B cell (primary cell): ENCODE measurements at regions of chr12 and their contacts with region 1.

Region 1: DNA sequence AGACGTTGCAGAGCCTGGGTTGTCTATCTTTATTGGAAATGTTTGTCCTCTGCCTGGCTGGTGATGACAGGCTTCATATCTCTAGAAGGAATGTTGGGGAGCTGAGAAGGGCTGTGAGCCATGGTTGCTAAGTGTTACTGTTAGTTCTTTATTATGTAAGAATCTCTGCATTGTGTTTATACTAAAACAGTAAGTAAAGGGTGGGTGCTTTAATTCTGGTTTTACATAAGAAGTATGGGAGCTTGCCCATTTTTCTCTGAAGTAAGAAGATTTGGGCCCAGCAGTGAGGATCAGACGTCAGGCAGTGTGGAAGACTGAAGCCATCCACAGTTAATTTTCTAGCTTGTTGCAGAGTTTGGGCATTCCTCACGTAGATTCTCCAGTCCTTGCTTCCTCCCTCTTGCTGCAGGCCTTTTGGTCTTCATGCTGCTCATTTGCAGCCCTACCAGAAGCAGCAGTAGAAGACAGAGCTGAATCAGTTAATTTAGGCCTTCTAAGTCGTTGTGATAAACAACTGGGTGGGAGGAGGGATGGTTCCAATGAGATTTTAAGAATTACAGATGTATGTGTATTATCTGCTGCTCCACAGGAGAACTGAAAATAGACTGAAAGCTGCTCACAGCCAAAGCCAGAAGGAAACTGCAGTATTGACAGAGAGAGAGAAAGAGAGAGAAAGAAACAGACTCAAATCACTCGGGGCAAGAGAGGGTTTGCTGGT is 21.4 kb downstream of the WNT5B start:
- DNase-seq: no peak
- ATAC-seq: no peak
- H3K4me3 ChIP-seq: no peak overlapping the region
- H3K4me3 Mint-ChIP-seq: no peak overlapping the region
- H3K27ac ChIP-seq: no peak overlapping the region
- H3K27ac Mint-ChIP-seq: no peak overlapping the region
- H3K4me1 ChIP-seq: peaks cover 0 to 19% of the 10 kb centered on the region in 2 donors
- H3K4me1 Mint-ChIP-seq: peaks cover 11% of the 10 kb centered on the region
- H3K27me3 ChIP-seq: no peaks in the 10 kb centered on the region
- H3K27me3 Mint-ChIP-seq: peaks cover 31% of the 10 kb centered on the region
- CTCF ChIP-seq: no peak

Region 2: DNA sequence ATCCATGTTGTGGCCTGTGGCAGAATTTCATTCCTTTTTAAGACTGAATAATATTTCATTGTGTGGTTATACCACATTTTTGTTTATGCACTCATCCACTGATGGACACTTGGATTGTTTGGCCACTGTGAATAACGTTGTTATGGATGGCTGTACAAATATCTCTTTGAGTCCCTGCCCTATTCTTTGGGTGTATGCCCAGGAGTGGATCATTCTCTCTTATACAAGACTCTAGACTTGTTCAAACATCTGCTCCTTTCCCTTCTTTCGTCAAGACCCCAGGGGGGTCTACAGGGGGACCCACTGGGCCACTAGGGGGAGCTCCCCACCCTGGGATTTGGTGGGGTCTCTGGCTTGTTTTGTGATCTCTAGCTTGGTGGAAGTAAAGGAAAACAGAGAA is 133.4 kb before region 1 on chr12:
- CTCF ChIA-PET with region 1: no interaction called
- POLR2A ChIA-PET with region 1: no interaction called
- intact Hi-C with region 1: no loop called
- DNase-seq: no peak
- ATAC-seq: no peak
- H3K4me3 ChIP-seq: no peak overlapping the region
- H3K4me3 Mint-ChIP-seq: no peak overlapping the region
- H3K27ac ChIP-seq: no peak overlapping the region
- H3K27ac Mint-ChIP-seq: no peak overlapping the region
- H3K4me1 ChIP-seq: no peaks in the 10 kb centered on the region
- H3K4me1 Mint-ChIP-seq: no peaks in the 10 kb centered on the region
- H3K27me3 ChIP-seq: peaks cover 0 to 15% (median 3%) of the 10 kb centered on the region in 4 experiments
- H3K27me3 Mint-ChIP-seq: peaks cover 25% of the 10 kb centered on the region
- CTCF ChIP-seq: no peak

Region 3: DNA sequence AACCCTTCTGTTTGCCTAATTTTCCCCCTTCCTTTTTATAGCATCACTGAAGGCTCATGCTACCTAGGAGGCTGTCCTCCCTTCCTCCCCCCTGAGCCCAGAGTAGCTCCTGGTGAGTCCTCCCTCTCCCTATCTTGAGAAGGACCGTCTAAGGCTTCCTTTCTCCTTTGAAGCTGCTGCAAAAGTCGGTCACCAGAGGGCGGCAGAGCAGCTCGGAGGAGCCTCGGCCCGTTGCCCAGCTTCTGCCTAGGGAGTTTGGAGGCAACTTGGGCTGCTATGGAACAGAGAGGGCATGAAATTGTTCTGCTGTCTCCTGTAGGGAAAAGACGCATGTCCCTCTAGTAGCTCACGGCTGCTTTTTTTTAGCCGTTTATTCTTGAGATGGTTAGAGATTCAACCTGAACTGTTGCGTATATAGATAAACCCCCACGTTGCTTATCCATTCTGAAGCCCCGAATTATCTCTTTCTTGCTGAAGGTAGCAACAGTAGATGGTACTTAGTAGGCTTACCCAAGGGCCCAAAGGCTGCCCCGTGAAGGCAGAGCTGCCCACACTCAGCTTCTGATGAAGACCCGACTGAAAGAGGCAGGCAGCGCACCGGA is 15.7 kb before region 1 on chr12:
- CTCF ChIA-PET with region 1: interaction called, 19 read pairs
- POLR2A ChIA-PET with region 1: no interaction called
- intact Hi-C with region 1: no loop called
- DNase-seq: peak; percentile 69
- ATAC-seq: peak; percentile 50
- H3K4me3 ChIP-seq: no peak overlapping the region
- H3K4me3 Mint-ChIP-seq: no peak overlapping the region
- H3K27ac ChIP-seq: no peak overlapping the region
- H3K27ac Mint-ChIP-seq: no peak overlapping the region
- H3K4me1 ChIP-seq: peaks cover 19 to 20% of the 10 kb centered on the region in 2 donors
- H3K4me1 Mint-ChIP-seq: peaks cover 19% of the 10 kb centered on the region
- H3K27me3 ChIP-seq: peaks cover 0 to 52% (median 31%) of the 10 kb centered on the region in 4 experiments
- H3K27me3 Mint-ChIP-seq: peaks cover 30% of the 10 kb centered on the region
- CTCF ChIP-seq: peak; percentile 91

Region 4: GRCh38 chr12:1661553-1662335 is 11.3 kb after region 1 on chr12:
- CTCF ChIA-PET with region 1: interaction called, 11 read pairs
- POLR2A ChIA-PET with region 1: interaction called, 3 read pairs
- intact Hi-C with region 1: no loop called
- DNase-seq: peak; percentile 84
- ATAC-seq: peak; percentile 90
- H3K4me3 ChIP-seq: peak overlapping the region in 4 of 5 experiments; percentile 54 to 71 (median 63)
- H3K4me3 Mint-ChIP-seq: peak overlapping the region; percentile 86
- H3K27ac ChIP-seq: peak overlapping the region in 1 of 2 donors; percentile 18
- H3K27ac Mint-ChIP-seq: peak overlapping the region; percentile 88
- H3K4me1 ChIP-seq: peaks cover 0 to 1% of the 10 kb centered on the region in 2 donors
- H3K4me1 Mint-ChIP-seq: peaks cover 18% of the 10 kb centered on the region
- H3K27me3 ChIP-seq: no peaks in the 10 kb centered on the region
- H3K27me3 Mint-ChIP-seq: no peaks in the 10 kb centered on the region
- CTCF ChIP-seq: no peak

Region 5: DNA sequence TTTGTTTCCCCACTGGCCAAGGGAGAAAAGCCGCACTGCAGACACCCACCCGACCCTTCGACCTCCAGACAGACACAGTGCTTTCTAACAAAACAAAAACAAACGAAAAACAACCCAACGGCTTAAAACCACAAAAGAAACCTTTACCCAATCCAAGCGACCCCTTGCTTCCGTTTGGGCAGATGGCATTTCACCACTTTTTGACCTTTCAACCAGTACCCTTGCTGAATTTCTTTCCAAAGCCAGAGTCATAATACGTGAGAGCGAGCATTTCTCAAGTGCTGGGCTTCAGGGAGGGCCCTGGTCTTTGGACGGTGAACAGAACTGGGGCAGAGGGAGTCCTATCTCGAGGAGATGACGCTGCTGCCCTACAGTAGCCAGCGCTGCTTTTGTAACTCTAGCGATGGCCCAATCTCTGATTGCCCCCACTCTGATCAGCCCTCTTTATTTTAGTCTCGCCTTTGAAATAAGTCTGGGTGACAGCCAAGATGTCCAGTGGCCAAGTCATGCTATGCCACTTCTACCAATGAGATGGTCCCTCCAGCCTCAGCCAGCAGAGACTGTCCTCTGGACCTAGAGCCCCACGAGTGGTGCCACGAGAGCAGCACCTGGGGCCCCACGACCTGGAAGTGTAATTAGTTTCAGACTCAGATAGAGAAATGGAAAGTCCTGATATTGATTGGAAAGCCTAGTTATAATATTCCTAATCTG is 18.6 kb after region 1 on chr12:
- CTCF ChIA-PET with region 1: interaction called, 16 read pairs
- POLR2A ChIA-PET with region 1: no interaction called
- intact Hi-C with region 1: no loop called
- DNase-seq: no peak
- ATAC-seq: no peak
- H3K4me3 ChIP-seq: no peak overlapping the region
- H3K4me3 Mint-ChIP-seq: peak overlapping the region; percentile 30
- H3K27ac ChIP-seq: no peak overlapping the region
- H3K27ac Mint-ChIP-seq: no peak overlapping the region
- H3K4me1 ChIP-seq: peaks cover 10 to 13% of the 10 kb centered on the region in 2 donors
- H3K4me1 Mint-ChIP-seq: peaks cover 18% of the 10 kb centered on the region
- H3K27me3 ChIP-seq: no peaks in the 10 kb centered on the region
- H3K27me3 Mint-ChIP-seq: no peaks in the 10 kb centered on the region
- CTCF ChIP-seq: no peak

Region 6: DNA sequence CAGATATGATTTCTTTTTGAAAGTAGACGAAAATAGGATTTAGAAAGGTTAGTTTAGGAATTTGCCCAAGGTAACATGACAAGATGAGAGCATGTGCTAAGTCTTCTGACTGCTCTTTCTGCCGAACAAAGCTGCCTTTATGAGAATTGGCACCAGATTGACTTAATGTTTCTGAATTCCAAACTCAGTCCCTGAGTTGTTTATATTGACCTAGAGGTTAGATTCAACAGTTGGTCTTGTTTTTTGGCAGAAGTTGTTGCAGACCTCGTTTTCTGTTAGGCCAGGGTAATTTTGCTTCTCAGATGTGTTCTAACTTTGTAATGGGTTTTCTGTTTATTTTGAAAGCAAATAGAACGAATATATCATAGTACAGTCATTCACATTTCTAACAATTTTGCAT is 108.5 kb after region 1 on chr12:
- CTCF ChIA-PET with region 1: no interaction called
- POLR2A ChIA-PET with region 1: no interaction called
- intact Hi-C with region 1: no loop called
- DNase-seq: no peak
- ATAC-seq: no peak
- H3K4me3 ChIP-seq: no peak overlapping the region
- H3K4me3 Mint-ChIP-seq: no peak overlapping the region
- H3K27ac ChIP-seq: no peak overlapping the region
- H3K27ac Mint-ChIP-seq: no peak overlapping the region
- H3K4me1 ChIP-seq: no peaks in the 10 kb centered on the region
- H3K4me1 Mint-ChIP-seq: no peaks in the 10 kb centered on the region
- H3K27me3 ChIP-seq: no peaks in the 10 kb centered on the region
- H3K27me3 Mint-ChIP-seq: no peaks in the 10 kb centered on the region
- CTCF ChIP-seq: no peak

Region 7: GRCh38 chr12:2783936-2784600 is 1133.6 kb after region 1 on chr12:
- CTCF ChIA-PET with region 1: no interaction called
- POLR2A ChIA-PET with region 1: no interaction called
- intact Hi-C with region 1: loop called (anchors 10 kb)
- DNase-seq: peak; percentile 66
- ATAC-seq: peak; percentile 84
- H3K4me3 ChIP-seq: peak overlapping the region in 4 of 5 experiments; percentile 20 to 50 (median 38)
- H3K4me3 Mint-ChIP-seq: peak overlapping the region; percentile 90
- H3K27ac ChIP-seq: no peak overlapping the region
- H3K27ac Mint-ChIP-seq: no peak overlapping the region
- H3K4me1 ChIP-seq: peaks cover 6 to 8% of the 10 kb centered on the region in 2 donors
- H3K4me1 Mint-ChIP-seq: peaks cover 13% of the 10 kb centered on the region
- H3K27me3 ChIP-seq: peaks cover 0 to 16% (median 2%) of the 10 kb centered on the region in 4 experiments
- H3K27me3 Mint-ChIP-seq: peaks cover 21% of the 10 kb centered on the region
- CTCF ChIP-seq: peak; percentile 97

Region 8: DNA sequence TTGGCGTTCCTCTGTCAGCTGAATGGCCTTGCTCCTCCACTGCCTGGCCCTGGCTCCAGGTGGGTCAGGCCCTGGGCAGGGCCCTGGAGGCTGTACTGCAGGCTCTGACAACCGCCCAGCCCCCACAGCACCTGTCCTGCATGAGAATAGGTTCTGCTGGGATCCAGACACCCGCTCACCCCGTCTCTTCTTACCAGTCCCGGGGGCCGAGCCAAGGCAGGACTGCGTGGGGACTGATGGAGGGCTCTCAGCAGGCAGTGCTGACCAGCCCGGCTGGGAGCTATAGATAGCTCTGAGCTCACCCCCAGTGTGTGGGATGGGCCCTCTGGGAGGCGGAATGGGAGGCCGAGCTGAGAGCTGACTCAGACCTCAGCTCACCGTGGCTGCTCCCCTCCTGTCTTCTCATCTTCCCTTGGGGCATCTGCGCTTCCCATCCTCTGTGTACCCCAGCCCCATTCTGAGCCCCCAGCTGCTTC is 1348.4 kb after region 1 on chr12:
- CTCF ChIA-PET with region 1: no interaction called
- POLR2A ChIA-PET with region 1: no interaction called
- intact Hi-C with region 1: no loop called
- DNase-seq: no peak
- ATAC-seq: no peak
- H3K4me3 ChIP-seq: no peak overlapping the region
- H3K4me3 Mint-ChIP-seq: no peak overlapping the region
- H3K27ac ChIP-seq: no peak overlapping the region
- H3K27ac Mint-ChIP-seq: no peak overlapping the region
- H3K4me1 ChIP-seq: no peaks in the 10 kb centered on the region
- H3K4me1 Mint-ChIP-seq: no peaks in the 10 kb centered on the region
- H3K27me3 ChIP-seq: peaks cover 0 to 2% (median 0%) of the 10 kb centered on the region in 4 experiments
- H3K27me3 Mint-ChIP-seq: peaks cover 7% of the 10 kb centered on the region
- CTCF ChIP-seq: no peak